AG04449 (cell line): ENCODE measurements at regions of chr17 and their contacts with region 1.

Region 1: GRCh38 chr17:8118769-8119580 is 661 bp upstream of the ALOXE3 start:
- DNase-seq: no peak
- H3K4me3 ChIP-seq: peak overlapping the region; percentile 73
- CTCF ChIP-seq: peak; percentile 93

Region 2: GRCh38 chr17:7803981-7804380 is 315.0 kb before region 1 on chr17:
- CTCF ChIA-PET with region 1: no interaction called
- POLR2A ChIA-PET with region 1: no interaction called
- DNase-seq: no peak
- H3K4me3 ChIP-seq: no peak overlapping the region
- CTCF ChIP-seq: no peak

Region 3: DNA sequence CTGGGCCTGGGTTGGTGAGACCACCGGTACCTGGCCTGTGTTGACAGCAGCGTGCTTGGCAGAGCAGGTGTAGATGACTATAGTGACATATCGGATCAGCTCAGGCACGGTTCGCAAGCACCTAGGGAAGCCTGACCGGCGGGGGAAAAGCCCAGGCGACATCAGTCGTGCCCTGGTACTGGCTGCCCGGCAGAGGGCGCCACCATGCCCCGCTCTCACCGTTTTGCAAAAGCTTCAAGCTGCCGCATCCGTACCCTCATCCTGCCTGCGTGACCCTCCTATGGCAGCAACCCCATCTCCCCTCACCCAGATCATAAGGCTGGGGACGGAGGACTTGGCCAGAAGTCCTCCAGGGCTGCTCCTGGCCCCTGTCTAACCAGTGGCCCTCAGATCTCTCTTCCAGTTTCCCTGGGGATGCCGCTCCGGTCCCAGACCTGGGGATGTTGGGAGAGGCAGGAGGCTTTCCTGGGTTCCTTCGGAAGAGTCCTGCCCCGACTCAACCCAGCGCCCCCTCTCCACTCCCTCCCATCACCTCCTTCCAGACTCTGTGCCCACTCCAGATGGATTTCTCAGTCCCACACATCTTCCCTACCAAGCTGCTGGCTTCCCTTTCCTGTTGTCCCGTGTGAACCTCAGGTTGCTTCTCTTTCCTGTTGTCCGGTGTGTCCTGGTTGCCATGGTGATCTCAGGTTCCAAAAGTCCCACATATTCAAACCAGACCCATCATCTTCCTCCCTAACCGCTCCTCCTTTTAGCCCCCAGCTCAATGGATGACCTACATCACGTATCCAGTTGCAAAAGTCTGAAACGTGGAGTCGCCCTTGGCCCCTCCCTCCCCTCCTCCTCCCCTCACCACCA is 45.1 kb before region 1 on chr17:
- CTCF ChIA-PET with region 1: interaction called, 132 read pairs
- POLR2A ChIA-PET with region 1: no interaction called
- DNase-seq: no peak
- H3K4me3 ChIP-seq: no peak overlapping the region
- CTCF ChIP-seq: peak; percentile 87

Region 4: GRCh38 chr17:8091033-8091687 is 27.8 kb before region 1 on chr17:
- CTCF ChIA-PET with region 1: interaction called, 168 read pairs
- POLR2A ChIA-PET with region 1: interaction called, 5 read pairs
- DNase-seq: no peak
- H3K4me3 ChIP-seq: no peak overlapping the region
- CTCF ChIP-seq: no peak

Region 5: DNA sequence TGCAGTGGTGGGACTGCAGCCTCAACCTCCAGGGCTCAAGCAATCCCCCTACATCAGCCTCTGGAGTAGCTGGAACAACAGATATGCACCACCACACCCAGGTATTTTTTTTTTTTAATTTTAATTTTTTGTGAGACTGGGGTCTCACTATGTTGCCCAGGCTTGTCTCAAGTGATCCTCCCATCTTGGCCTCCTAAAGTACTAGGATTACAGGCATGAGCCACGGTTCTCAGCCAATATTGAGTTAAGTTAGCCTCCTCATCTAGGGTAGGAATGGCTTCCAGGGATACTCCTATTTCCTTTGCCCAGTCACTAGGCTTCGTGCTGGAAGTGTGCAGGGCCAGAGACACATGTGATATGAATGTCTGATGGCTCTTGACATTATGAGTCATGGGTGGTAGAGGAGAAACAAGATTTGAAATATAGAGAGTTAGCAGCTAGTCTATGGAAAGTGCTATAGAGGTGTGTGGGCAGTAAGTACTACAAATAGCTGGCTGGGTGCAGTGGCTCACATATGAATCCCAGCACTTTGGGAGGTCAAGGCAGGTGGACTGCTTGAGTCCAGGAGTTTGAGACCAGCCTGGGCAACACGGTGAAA is 13.0 kb after region 1 on chr17:
- CTCF ChIA-PET with region 1: interaction called, 37 read pairs
- POLR2A ChIA-PET with region 1: no interaction called
- DNase-seq: no peak
- H3K4me3 ChIP-seq: no peak overlapping the region
- CTCF ChIP-seq: no peak

Region 6: GRCh38 chr17:8151123-8151640 is 32.2 kb after region 1 on chr17:
- CTCF ChIA-PET with region 1: interaction called, 41 read pairs
- POLR2A ChIA-PET with region 1: interaction called, 8 read pairs
- DNase-seq: peak; percentile 51
- H3K4me3 ChIP-seq: peak overlapping the region; percentile 95
- CTCF ChIP-seq: peak; percentile 0

Region 7: DNA sequence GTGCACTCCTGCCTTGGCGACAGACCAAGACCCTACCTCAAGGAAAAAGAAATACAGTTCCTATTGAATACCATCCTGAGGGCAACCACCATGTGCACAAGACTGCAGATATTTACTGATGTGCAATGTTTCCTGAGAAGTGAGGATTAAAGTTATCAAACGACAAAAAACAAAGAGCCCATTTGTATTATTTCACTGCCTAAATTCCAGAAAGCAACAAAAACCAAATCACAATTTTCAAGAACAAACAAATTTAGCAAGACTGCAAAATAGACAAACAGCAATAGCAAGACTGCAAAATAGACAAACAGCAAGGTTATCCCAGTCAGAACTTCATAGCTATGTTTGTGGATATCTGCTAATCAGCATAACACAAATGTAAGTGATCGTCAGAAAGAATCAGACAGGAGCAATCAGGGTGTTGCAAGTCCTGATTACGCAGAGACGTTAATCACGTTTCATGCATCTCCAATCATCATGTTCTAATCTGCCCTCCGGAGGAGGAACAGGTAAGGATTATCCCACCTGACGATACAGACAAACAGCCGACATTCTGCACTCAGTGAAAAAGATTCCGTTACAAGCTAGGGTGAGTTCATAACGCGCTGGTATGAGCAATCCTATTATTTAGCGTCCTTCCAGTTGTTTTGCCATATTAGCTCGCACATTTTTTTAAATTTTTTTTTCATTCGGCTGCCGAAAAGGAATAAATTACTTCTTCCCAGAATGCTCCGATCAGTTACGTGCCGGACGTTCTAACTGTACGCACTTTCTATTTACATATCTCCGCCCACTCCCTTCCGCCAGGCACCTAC is 54.3 kb after region 1 on chr17:
- CTCF ChIA-PET with region 1: interaction called, 4 read pairs
- POLR2A ChIA-PET with region 1: interaction called, 12 read pairs
- DNase-seq: peak; percentile 91
- H3K4me3 ChIP-seq: peak overlapping the region; percentile 55
- CTCF ChIP-seq: no peak

Region 8: GRCh38 chr17:8222630-8223356 is 103.8 kb after region 1 on chr17:
- CTCF ChIA-PET with region 1: interaction called, 21 read pairs
- POLR2A ChIA-PET with region 1: interaction called, 9 read pairs
- DNase-seq: peak; percentile 62
- H3K4me3 ChIP-seq: peak overlapping the region; percentile 89
- CTCF ChIP-seq: no peak